ENCODE measurements at regions of chr12 and their contacts with region 1.

Region 1: DNA sequence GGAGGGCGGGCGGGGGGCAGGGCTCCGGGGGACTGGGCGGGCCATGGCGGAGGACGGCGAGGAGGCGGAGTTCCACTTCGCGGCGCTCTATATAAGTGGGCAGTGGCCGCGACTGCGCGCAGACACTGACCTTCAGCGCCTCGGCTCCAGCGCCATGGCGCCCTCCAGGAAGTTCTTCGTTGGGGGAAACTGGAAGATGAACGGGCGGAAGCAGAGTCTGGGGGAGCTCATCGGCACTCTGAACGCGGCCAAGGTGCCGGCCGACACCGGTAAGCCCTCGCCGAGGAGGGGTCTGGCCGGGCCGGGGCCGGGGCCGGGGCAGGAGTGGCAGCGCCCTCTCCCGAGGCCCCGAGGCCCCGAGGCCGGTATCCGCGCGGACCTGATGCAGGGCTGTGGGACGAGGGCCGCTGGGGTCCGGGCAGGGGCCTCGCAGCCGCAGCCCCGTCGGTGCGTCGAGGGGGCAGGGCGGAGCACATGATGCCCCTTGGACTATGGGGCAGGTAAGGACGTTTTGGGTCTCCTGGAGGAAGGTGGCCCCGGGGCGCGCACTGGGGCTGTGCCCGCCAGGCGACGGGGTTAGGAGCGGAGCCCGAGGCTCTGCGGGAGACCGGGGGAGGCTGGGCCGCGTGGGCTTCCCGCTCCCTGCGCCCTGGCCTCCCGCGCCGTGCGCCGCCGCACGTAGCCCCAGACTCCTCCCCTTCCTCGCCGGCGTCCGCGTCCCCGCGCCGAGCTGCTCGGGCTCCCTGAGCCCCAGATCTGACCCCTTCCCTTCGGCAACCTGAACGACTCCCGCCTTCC is at the start of gene TPI1:
- DNase-seq: peak in 33 of 35 experiments; percentile 32 to 82 (median 52)
- ATAC-seq: peak; percentile 75 to 79 (median 76)
- H3K4me3 ChIP-seq: peak within 1 kb of the TSS; percentile 62 to 65
- H3K4me3 Mint-ChIP-seq: peak within 1 kb of the TSS; percentile 86 to 92 (median 87)
- H3K27ac ChIP-seq: peak within 1 kb of the TSS; percentile 86
- H3K27ac Mint-ChIP-seq: peak within 1 kb of the TSS; percentile 91
- H3K4me1 ChIP-seq: peaks cover 20 to 56% of the 10 kb centered on the region in 2 experiments
- H3K4me1 Mint-ChIP-seq: peaks cover 49 to 54% (median 51%) of the 10 kb centered on the region in 3 donors
- H3K27me3 ChIP-seq: no peaks in the 10 kb centered on the region
- H3K27me3 Mint-ChIP-seq: no peaks in the 10 kb centered on the region
- total RNA-seq, gene TPI1: 132 to 208 (median 189) TPM

Region 2: DNA sequence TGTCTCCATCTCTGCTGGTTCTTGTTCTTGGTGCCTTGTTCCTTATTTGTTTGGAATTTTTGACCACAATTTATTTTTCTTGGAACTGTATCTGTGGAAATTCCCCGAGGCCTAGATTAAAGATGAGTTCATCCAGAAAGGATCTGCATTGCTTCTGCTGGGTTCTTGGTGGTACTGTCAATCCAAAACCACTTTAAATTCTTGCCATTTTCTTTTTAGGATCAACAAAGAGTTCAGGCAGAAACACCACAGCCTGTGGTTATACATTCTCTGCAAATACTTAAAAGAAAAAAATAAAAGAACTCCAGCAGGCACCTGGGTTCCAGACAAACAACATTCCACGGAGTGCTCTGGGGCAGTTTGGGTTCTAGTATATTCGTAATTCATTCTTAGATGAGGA is 391.1 kb before region 1 on chr12:
- CTCF ChIA-PET with region 1: no interaction called
- POLR2A ChIA-PET with region 1: no interaction called
- DNase-seq: no peak
- ATAC-seq: no peak
- H3K4me3 ChIP-seq: no peak overlapping the region
- H3K4me3 Mint-ChIP-seq: no peak overlapping the region
- H3K27ac ChIP-seq: no peak overlapping the region
- H3K27ac Mint-ChIP-seq: peak overlapping the region in 1 of 2 donors; percentile 17
- H3K4me1 ChIP-seq: peaks cover 0 to 2% of the 10 kb centered on the region in 2 experiments
- H3K4me1 Mint-ChIP-seq: peaks cover 1 to 4% (median 1%) of the 10 kb centered on the region in 3 donors
- H3K27me3 ChIP-seq: no peaks in the 10 kb centered on the region
- H3K27me3 Mint-ChIP-seq: no peaks in the 10 kb centered on the region

Region 3: GRCh38 chr12:6745741-6746525 is 121.7 kb before region 1 on chr12:
- CTCF ChIA-PET with region 1: no interaction called
- POLR2A ChIA-PET with region 1: no interaction called
- DNase-seq: peak in 18 of 35 experiments; percentile 13 to 57 (median 31)
- ATAC-seq: peak; percentile 83 to 95 (median 92)
- H3K4me3 ChIP-seq: no peak overlapping the region
- H3K4me3 Mint-ChIP-seq: no peak overlapping the region
- H3K27ac ChIP-seq: peak overlapping the region; percentile 8
- H3K27ac Mint-ChIP-seq: peak overlapping the region; percentile 90 to 92
- H3K4me1 ChIP-seq: peaks cover 5 to 17% of the 10 kb centered on the region in 2 experiments
- H3K4me1 Mint-ChIP-seq: peaks cover 15 to 18% (median 16%) of the 10 kb centered on the region in 3 donors
- H3K27me3 ChIP-seq: no peaks in the 10 kb centered on the region
- H3K27me3 Mint-ChIP-seq: no peaks in the 10 kb centered on the region

Region 4: DNA sequence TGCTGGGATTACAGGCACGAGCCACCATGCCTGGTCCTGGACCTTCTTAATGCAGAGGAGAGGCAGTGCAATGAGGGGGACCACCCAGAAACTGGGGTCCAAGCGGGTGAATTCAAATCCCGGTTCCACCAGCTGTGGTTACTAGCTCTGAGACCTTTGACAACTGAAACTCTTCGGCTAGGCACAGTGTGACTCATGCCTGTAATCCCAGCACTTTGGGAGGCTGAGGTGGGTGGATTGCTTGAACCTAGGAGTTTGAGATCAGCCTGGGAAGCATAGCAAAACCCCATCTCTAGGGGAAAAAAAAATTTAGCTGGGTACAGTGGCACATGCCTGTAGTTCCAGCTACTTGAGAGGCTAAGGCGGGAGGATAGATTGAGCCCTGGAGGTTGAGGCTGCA is 83.3 kb before region 1 on chr12:
- CTCF ChIA-PET with region 1: no interaction called
- POLR2A ChIA-PET with region 1: no interaction called
- DNase-seq: no peak
- ATAC-seq: no peak
- H3K4me3 ChIP-seq: no peak overlapping the region
- H3K4me3 Mint-ChIP-seq: peak overlapping the region in 1 of 3 donors; percentile 59
- H3K27ac ChIP-seq: peak overlapping the region; percentile 41
- H3K27ac Mint-ChIP-seq: peak overlapping the region; percentile 82 to 91
- H3K4me1 ChIP-seq: peaks cover 61 to 87% of the 10 kb centered on the region in 2 experiments
- H3K4me1 Mint-ChIP-seq: peaks cover 56 to 75% (median 57%) of the 10 kb centered on the region in 3 donors
- H3K27me3 ChIP-seq: no peaks in the 10 kb centered on the region
- H3K27me3 Mint-ChIP-seq: no peaks in the 10 kb centered on the region

Region 5: DNA sequence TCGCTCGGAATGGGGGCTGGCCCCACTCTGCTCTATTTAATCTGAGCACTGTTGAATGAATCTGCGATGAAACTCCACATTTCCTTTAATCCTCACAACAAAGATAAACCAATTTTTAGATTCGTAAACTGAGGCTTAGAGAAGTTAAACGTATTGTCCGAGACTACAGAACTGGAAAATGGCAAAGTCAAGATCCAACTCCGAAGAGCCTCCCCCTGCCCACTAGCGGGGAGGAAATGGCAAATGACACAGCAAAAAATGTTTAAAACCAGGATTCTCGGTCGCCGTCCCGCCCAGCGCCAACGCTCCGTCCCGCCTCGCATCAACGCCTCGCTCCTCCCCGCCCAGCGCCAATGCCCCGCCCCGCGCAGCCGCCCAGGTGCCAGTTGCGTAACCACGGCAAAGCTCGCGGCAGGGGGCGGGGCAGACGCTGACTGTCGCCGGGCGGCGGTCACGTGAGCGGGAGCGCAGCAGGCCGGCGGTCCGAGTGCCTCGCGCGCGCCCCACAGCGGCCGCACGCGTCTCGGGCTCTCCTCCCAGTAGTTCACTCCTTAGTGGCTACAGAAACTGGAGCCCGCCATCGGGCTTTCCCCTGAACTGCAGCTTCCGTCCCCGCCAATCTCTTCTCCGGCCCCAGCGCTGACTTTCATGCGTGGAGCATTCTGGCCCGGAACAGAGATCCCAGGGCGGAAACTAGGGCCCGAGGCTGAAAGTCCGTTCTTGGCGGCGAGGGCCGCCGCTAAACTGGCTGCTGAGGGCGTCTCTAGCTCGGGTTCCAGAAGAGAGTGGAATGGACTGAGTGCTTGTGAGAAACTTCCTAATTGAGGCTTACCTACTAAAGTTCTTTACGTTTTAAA is 23.4 kb after region 1 on chr12:
- CTCF ChIA-PET with region 1: interaction called in 1 of 2 experiments, 43 read pairs
- POLR2A ChIA-PET with region 1: no interaction called
- DNase-seq: peak; percentile 94 to 100 (median 98)
- ATAC-seq: peak; percentile 93 to 98 (median 96)
- H3K4me3 ChIP-seq: peak overlapping the region; percentile 56 to 71
- H3K4me3 Mint-ChIP-seq: peak overlapping the region; percentile 77 to 80 (median 80)
- H3K27ac ChIP-seq: peak overlapping the region; percentile 90
- H3K27ac Mint-ChIP-seq: peak overlapping the region; percentile 89 to 90
- H3K4me1 ChIP-seq: peaks cover 3 to 16% of the 10 kb centered on the region in 2 experiments
- H3K4me1 Mint-ChIP-seq: peaks cover 13 to 15% (median 13%) of the 10 kb centered on the region in 3 donors
- H3K27me3 ChIP-seq: no peaks in the 10 kb centered on the region
- H3K27me3 Mint-ChIP-seq: no peaks in the 10 kb centered on the region

Measured in T-cell (primary cell).